Ascending aorta (tissue), 2 donors: ENCODE measurements at regions of chr1 and their contacts with region 1.

Region 1: DNA sequence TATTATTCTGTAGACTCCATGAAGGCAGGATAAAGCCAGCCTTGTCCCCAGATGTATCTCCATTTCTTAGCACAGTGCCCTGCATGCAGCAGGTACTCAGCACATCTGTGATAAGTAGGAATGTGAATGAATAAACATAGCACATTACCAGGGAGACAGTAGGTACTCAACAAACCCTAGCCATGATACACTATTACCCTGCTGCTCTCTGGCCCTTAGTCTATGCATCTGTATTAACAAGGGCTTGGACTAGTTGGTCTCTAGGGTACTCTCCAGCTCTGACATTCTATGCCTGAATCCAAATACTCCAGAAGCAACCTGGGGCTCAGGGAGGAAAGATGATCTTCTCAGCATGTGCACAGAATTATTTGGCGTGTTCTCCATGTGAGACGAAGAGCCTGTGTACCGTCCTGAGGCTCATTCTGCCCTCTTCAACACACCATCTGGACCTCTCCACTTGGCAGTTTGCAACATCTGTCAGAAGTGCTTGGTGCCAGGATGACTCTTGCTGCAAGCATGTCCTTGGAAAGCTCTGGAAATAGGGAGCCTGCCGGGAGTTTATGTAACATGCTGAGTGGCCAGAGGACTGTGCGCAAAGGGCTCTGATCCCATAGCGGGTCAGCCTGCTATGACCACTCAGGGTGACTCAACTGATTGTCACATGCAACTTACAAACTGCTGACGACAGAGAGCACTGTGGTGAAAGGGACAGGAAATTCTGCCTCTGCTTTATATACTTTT is 228.2 kb upstream of the USP24 start:
- DNase-seq: peak; percentile 91 to 97
- H3K4me3 ChIP-seq: no peak overlapping the region
- H3K27ac ChIP-seq: peak overlapping the region; percentile 62 to 79
- H3K4me1 ChIP-seq: peaks cover 5 to 16% of the 10 kb centered on the region in 2 donors
- H3K27me3 ChIP-seq: no peaks in the 10 kb centered on the region
- CTCF ChIP-seq: no peak

Region 2: GRCh38 chr1:55584526-55585401 is 141.4 kb after region 1 on chr1:
- intact Hi-C with region 1: loop called (anchors 5 kb)
- DNase-seq: no peak
- H3K4me3 ChIP-seq: no peak overlapping the region
- H3K27ac ChIP-seq: peak overlapping the region; percentile 27 to 28
- H3K4me1 ChIP-seq: peaks cover 11 to 40% of the 10 kb centered on the region in 2 donors
- H3K27me3 ChIP-seq: no peaks in the 10 kb centered on the region
- CTCF ChIP-seq: no peak

Region 3: DNA sequence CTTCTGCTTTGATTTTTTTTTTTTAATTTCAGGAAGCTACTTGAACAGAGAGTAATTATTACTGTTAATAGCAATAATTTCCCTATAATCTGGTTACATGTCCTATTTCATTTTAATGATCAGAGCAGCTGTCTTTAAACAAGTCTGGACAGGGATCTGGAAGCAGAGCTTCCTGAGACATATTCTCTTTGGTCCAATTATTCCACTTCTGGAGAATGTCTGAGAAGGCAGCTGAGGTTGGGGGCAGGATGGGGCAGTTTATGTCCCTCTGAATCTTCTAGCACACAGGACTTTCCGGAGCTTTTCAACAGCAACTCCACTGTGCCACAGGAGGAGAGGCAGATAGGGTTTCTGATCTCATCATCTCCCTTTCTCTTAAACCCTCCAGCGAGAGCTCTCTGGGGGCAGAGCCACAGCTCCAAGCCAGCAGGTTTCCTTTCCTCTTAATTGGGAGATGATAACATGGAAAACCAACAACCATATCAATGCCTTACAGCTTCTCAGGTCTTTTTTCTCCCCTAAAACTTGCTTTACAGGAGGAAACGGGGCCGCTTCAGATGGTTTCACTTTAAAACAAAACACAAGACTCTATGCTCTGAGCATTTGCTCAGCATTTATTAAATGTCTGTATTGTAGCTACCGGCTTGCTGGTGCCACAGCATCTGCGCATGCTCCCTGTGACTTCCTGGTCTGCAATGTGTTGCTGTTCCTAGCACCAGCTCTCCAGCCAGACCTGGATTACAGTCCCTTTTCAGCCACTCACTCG is 197.5 kb after region 1 on chr1:
- intact Hi-C with region 1: no loop called
- DNase-seq: peak; percentile 19 to 83
- H3K4me3 ChIP-seq: peak overlapping the region; percentile 23 to 53
- H3K27ac ChIP-seq: peak overlapping the region; percentile 58 to 68
- H3K4me1 ChIP-seq: peaks cover 0 to 10% of the 10 kb centered on the region in 2 donors
- H3K27me3 ChIP-seq: no peaks in the 10 kb centered on the region
- CTCF ChIP-seq: no peak